B cell (primary cell): ENCODE measurements at regions of chr14 and their contacts with region 1.

Region 1: DNA sequence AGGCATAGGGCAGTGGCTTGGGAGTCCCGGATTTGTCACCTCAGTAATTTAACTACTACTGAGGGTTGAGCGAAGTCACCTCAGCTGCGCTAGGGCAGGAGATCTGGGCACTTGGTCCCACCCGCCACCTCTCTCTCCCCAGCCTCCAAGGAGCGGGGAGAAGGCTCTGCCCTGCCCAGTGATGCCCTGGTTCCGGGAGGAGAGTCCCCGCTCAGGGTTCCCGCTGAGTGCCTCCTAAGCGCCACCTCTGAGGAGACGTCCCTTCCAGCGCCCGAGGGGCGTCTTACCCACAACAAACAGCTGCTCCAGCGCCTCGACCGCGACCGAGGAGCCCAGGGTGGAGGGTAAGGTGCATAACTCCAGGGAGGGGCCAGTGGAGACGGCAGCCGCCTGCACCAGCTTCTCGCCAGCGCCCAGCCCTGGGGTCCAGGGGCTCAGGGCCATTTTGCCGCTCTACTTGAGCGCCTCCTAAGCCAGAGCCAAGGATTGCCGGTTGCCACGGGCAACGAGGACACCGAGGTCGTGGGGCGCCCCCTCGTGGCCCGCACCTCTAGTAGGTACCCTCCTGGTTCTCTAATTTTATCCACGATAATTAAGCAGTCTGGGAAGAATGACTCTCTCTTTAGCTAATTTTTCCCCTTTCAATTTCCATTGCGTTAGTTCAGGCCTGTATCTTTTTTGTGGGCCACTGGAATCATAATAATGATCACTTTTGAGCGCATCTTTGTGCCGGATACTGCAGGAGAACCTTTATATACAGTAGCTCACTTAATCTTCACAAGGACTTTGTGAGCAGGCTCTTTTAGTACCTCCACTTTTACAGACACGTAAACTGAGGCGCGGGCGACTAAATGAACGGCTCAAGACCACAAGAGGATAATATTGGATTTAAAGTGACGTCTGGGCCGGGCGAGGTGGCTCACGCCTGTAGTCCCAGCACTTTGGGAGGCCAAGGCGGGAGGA is at the start of gene CCDC175:
- DNase-seq: peak; percentile 83
- ATAC-seq: peak; percentile 90
- H3K4me3 ChIP-seq: peak within 1 kb of the TSS; percentile 26 to 62 (median 56)
- H3K4me3 Mint-ChIP-seq: peak within 1 kb of the TSS; percentile 75
- H3K27ac ChIP-seq: peak within 1 kb of the TSS in 1 of 2 donors; percentile 20
- H3K27ac Mint-ChIP-seq: no peak within 1 kb of the TSS
- H3K4me1 ChIP-seq: peaks cover 10 to 13% of the 10 kb centered on the region in 2 donors
- H3K4me1 Mint-ChIP-seq: peaks cover 13% of the 10 kb centered on the region
- H3K27me3 ChIP-seq: peaks cover 0 to 15% (median 6%) of the 10 kb centered on the region in 4 experiments
- H3K27me3 Mint-ChIP-seq: peaks cover 22% of the 10 kb centered on the region
- CTCF ChIP-seq: peak; percentile 91
- total RNA-seq, gene CCDC175: not detected in 2 replicates

Region 2: GRCh38 chr14:59028476-59029202 is 548.0 kb before region 1 on chr14:
- CTCF ChIA-PET with region 1: no interaction called
- POLR2A ChIA-PET with region 1: no interaction called
- intact Hi-C with region 1: loop called (anchors 1 kb)
- DNase-seq: peak; percentile 41
- ATAC-seq: peak; percentile 45
- H3K4me3 ChIP-seq: no peak overlapping the region
- H3K4me3 Mint-ChIP-seq: no peak overlapping the region
- H3K27ac ChIP-seq: no peak overlapping the region
- H3K27ac Mint-ChIP-seq: no peak overlapping the region
- H3K4me1 ChIP-seq: no peaks in the 10 kb centered on the region
- H3K4me1 Mint-ChIP-seq: peaks cover 4% of the 10 kb centered on the region
- H3K27me3 ChIP-seq: no peaks in the 10 kb centered on the region
- H3K27me3 Mint-ChIP-seq: peaks cover 24% of the 10 kb centered on the region
- CTCF ChIP-seq: peak; percentile 54

Region 3: DNA sequence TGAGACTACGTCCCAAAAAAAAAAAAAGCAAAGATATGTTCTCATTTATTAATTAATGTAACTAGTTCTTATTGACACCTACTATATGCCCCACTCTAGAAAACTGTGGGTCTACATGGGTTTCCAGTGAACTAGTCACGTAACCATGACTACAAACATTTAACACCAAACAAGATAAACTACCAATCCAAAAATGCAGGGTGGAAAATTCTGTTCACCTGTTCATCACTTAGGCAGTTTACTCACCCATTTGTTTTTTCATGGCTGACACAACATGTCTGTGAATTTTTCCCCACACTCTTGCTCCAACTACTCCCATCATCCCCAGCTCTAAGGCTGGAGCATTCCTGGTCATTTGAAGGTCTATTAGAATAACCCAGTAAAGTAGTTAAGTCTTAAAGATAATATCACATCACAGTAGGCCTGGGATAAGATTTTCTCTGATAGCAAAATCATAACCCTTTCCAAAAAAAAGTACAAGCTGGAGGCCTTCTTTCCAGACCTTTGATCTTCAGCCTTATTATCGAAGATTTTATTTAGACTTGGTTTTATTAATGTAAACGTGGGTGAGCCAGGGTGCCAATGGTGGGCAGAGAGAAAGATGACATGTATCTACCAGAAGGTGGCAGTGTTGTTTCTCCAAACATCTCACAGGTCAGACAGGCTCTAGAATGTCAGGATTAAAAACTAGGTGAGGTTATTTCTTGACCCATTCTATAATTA is 449.7 kb before region 1 on chr14:
- CTCF ChIA-PET with region 1: interaction called, 15 read pairs
- POLR2A ChIA-PET with region 1: no interaction called
- intact Hi-C with region 1: no loop called
- DNase-seq: peak; percentile 73
- ATAC-seq: peak; percentile 80
- H3K4me3 ChIP-seq: no peak overlapping the region
- H3K4me3 Mint-ChIP-seq: no peak overlapping the region
- H3K27ac ChIP-seq: no peak overlapping the region
- H3K27ac Mint-ChIP-seq: no peak overlapping the region
- H3K4me1 ChIP-seq: no peaks in the 10 kb centered on the region
- H3K4me1 Mint-ChIP-seq: peaks cover 3% of the 10 kb centered on the region
- H3K27me3 ChIP-seq: peaks cover 0 to 4% (median 1%) of the 10 kb centered on the region in 4 experiments
- H3K27me3 Mint-ChIP-seq: peaks cover 8% of the 10 kb centered on the region
- CTCF ChIP-seq: peak; percentile 94

Region 4: GRCh38 chr14:59483900-59484638 is 92.5 kb before region 1 on chr14 and contains the starts of genes JKAMP and L3HYPDH:
- CTCF ChIA-PET with region 1: interaction called, 3 read pairs
- POLR2A ChIA-PET with region 1: no interaction called
- intact Hi-C with region 1: loop called (anchors 1 kb)
- DNase-seq: peak; percentile 96
- ATAC-seq: peak; percentile 92
- H3K4me3 ChIP-seq: peak within 1 kb of the TSS; percentile 83 to 97 (median 93)
- H3K4me3 Mint-ChIP-seq: peak within 1 kb of the TSS; percentile 96
- H3K27ac ChIP-seq: peak within 1 kb of the TSS; percentile 57 to 79
- H3K27ac Mint-ChIP-seq: peak within 1 kb of the TSS; percentile 90
- H3K4me1 ChIP-seq: peaks cover 36 to 40% of the 10 kb centered on the region in 2 donors
- H3K4me1 Mint-ChIP-seq: peaks cover 56% of the 10 kb centered on the region
- H3K27me3 ChIP-seq: no peaks in the 10 kb centered on the region
- H3K27me3 Mint-ChIP-seq: no peaks in the 10 kb centered on the region
- CTCF ChIP-seq: peak; percentile 70
- total RNA-seq, gene JKAMP: 25.7 and 30.3 TPM in 2 replicates
- total RNA-seq, gene L3HYPDH: 67.3 and 74.5 TPM in 2 replicates

Region 5: DNA sequence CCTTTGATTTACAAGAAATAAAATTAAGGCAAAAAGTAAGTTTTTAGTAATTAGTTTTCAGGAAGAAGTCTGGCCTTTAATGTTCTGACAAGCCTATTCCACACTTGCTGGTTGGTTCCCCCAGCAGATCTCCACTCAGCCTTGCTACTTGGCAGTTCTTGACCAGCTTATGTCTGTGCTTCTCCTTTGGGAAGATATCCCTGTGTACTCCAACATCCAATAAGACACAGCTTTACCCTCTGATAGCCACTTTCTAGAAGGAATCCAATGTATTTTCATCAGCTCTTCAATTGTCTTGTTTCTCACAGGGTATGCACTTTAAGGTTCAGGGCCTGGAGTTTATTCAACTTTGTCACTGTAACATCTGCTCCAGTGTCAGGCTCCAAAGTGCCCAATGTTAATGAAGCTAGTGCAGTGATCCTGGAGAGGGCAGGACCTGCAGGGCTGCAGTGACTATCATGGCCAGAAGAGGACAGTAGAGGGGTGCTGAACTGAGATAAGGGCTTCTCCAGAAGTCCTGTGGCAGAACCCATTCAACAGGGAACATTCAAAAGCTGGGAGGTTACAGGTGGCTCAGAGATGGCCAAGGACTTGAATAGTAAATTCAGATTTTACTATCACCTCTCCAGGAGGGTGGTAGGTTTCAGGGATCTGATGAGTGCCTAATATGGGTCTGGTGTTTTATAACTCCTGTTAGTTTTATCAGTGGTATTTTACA is 69.4 kb before region 1 on chr14:
- CTCF ChIA-PET with region 1: interaction called, 14 read pairs
- POLR2A ChIA-PET with region 1: no interaction called
- intact Hi-C with region 1: no loop called
- DNase-seq: peak; percentile 48
- ATAC-seq: peak; percentile 61
- H3K4me3 ChIP-seq: no peak overlapping the region
- H3K4me3 Mint-ChIP-seq: no peak overlapping the region
- H3K27ac ChIP-seq: no peak overlapping the region
- H3K27ac Mint-ChIP-seq: no peak overlapping the region
- H3K4me1 ChIP-seq: no peaks in the 10 kb centered on the region
- H3K4me1 Mint-ChIP-seq: no peaks in the 10 kb centered on the region
- H3K27me3 ChIP-seq: peaks cover 0 to 2% (median 0%) of the 10 kb centered on the region in 4 experiments
- H3K27me3 Mint-ChIP-seq: no peaks in the 10 kb centered on the region
- CTCF ChIP-seq: peak; percentile 74

Region 6: DNA sequence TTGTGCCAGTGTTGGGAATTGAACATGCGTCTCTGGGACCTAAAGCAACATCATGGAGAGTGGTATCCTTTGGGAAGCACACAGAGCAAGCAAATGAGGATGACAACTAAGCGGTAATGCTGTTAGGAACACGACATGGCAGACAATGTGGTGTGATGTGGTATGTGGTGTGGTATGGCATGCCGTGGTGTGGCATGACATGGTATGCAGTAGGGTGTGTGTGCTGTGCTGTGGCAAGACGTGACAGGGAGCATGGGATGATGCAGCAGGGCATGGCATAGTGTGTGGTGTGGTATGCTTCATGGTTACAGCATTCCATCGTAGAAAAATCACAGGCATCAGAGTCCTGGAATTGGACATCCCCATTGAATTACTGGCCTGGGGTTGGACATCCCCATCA is 185.2 kb after region 1 on chr14:
- CTCF ChIA-PET with region 1: no interaction called
- POLR2A ChIA-PET with region 1: no interaction called
- intact Hi-C with region 1: no loop called
- DNase-seq: no peak
- ATAC-seq: no peak
- H3K4me3 ChIP-seq: no peak overlapping the region
- H3K4me3 Mint-ChIP-seq: no peak overlapping the region
- H3K27ac ChIP-seq: no peak overlapping the region
- H3K27ac Mint-ChIP-seq: no peak overlapping the region
- H3K4me1 ChIP-seq: no peaks in the 10 kb centered on the region
- H3K4me1 Mint-ChIP-seq: no peaks in the 10 kb centered on the region
- H3K27me3 ChIP-seq: no peaks in the 10 kb centered on the region
- H3K27me3 Mint-ChIP-seq: peaks cover 5% of the 10 kb centered on the region
- CTCF ChIP-seq: no peak